Mammary epithelial cell (primary cell): ENCODE measurements at regions of chr2 and their contacts with region 1.

Region 1: GRCh38 chr2:227766373-227766883 is 20.7 kb downstream of the SCYGR8 start:
- DNase-seq: peak; percentile 51
- H3K4me3 ChIP-seq: no peak overlapping the region
- H3K27ac ChIP-seq: no peak overlapping the region
- H3K4me1 ChIP-seq: no peaks in the 10 kb centered on the region
- H3K27me3 ChIP-seq: no peaks in the 10 kb centered on the region
- CTCF ChIP-seq: peak; percentile 81 to 85

Region 2: DNA sequence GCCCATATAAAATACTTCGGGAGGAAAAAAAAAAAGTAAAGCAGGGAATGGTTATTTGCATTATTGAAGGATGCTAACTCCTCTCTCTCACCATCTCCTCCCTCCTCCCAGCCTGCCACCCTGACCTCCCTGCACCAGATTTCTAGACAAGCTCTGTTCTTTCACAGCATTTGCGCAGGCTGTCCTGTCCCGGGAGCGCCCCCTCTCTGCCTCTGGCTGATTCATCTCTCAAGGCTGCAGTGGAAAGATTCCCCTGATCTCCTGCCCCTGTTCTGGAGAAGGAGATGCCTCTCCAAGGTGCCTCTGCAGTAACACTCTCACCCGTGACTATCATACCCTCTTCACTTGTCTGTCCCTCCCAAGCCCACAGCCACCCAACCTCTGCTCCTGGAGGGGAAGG is 640.9 kb before region 1 on chr2:
- CTCF ChIA-PET with region 1: no interaction called
- dilution Hi-C with region 1: no loop called
- in situ Hi-C with region 1: loop called (anchors 25 kb)
- intact Hi-C with region 1: loop called (anchors 2 kb)
- DNase-seq: no peak
- H3K4me3 ChIP-seq: no peak overlapping the region
- H3K27ac ChIP-seq: no peak overlapping the region
- H3K4me1 ChIP-seq: no peaks in the 10 kb centered on the region
- H3K27me3 ChIP-seq: peaks cover 1% of the 10 kb centered on the region
- CTCF ChIP-seq: no peak

Region 3: DNA sequence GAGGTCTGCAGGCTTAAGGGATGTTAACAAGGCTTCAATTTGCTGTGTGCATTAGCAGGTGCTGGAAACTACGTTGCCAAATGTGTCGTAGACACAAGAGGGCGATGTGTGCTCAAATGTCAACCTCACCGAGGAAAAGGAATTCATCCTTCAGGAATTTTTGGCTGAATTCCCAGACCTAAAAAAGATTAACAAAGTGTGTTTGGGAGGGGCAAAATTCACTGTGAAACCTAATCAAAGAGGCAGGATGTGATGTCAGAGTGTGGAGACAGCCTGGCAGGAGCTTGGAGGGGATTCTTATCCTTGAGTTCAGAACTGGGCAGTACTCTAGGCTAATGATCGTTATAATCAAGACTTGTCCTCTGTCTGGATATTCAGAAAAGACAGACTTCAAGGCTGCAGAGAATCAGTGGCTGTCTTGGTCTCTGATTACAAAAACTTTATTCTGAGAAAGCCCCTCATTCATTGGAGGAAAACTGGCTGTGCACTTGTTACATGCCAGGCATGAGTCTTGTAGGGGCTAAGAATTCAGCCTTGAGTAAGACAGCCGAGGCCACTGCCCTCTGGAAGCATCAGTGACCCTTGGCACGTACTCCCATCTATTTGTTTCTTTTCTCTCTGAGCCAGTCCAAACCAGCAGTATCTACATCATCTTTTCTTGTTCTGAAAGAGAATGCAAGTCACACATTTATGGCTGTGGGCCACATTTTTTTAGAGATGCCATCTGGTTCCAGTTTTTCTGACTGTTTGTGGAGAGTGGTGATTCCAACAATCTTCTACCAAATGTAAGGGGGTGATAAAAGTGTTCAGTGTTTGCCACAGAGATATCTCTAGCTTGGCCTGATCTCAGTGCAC is 360.0 kb before region 1 on chr2:
- CTCF ChIA-PET with region 1: no interaction called
- dilution Hi-C with region 1: no loop called
- in situ Hi-C with region 1: loop called (anchors 10 to 25 kb)
- intact Hi-C with region 1: loop called (anchors 1 kb)
- DNase-seq: peak; percentile 95
- H3K4me3 ChIP-seq: no peak overlapping the region
- H3K27ac ChIP-seq: peak overlapping the region; percentile 87
- H3K4me1 ChIP-seq: peaks cover 20% of the 10 kb centered on the region
- H3K27me3 ChIP-seq: no peaks in the 10 kb centered on the region
- CTCF ChIP-seq: peak; percentile 82 to 83

Region 4: GRCh38 chr2:227479865-227480475 is 286.5 kb before region 1 on chr2:
- CTCF ChIA-PET with region 1: interaction called, 4 read pairs
- dilution Hi-C with region 1: no loop called
- in situ Hi-C with region 1: no loop called
- intact Hi-C with region 1: loop called (anchors 1 kb)
- DNase-seq: no peak
- H3K4me3 ChIP-seq: no peak overlapping the region
- H3K27ac ChIP-seq: no peak overlapping the region
- H3K4me1 ChIP-seq: peaks cover 12% of the 10 kb centered on the region
- H3K27me3 ChIP-seq: no peaks in the 10 kb centered on the region
- CTCF ChIP-seq: peak in 1 of 2 donors; percentile 6

Region 5: GRCh38 chr2:227661019-227661649 is 105.3 kb before region 1 on chr2:
- CTCF ChIA-PET with region 1: interaction called, 14 read pairs
- dilution Hi-C with region 1: no loop called
- in situ Hi-C with region 1: loop called (anchors 10 kb)
- intact Hi-C with region 1: loop called (anchors 1 kb)
- DNase-seq: no peak
- H3K4me3 ChIP-seq: no peak overlapping the region
- H3K27ac ChIP-seq: no peak overlapping the region
- H3K4me1 ChIP-seq: no peaks in the 10 kb centered on the region
- H3K27me3 ChIP-seq: no peaks in the 10 kb centered on the region
- CTCF ChIP-seq: no peak

Region 6: GRCh38 chr2:227884511-227884947 is 118.1 kb after region 1 on chr2:
- CTCF ChIA-PET with region 1: no interaction called
- dilution Hi-C with region 1: no loop called
- in situ Hi-C with region 1: no loop called
- intact Hi-C with region 1: loop called (anchors 5 kb)
- DNase-seq: peak; percentile 58
- H3K4me3 ChIP-seq: no peak overlapping the region
- H3K27ac ChIP-seq: no peak overlapping the region
- H3K4me1 ChIP-seq: peaks cover 7% of the 10 kb centered on the region
- H3K27me3 ChIP-seq: no peaks in the 10 kb centered on the region
- CTCF ChIP-seq: peak; percentile 90 to 98

Region 7: DNA sequence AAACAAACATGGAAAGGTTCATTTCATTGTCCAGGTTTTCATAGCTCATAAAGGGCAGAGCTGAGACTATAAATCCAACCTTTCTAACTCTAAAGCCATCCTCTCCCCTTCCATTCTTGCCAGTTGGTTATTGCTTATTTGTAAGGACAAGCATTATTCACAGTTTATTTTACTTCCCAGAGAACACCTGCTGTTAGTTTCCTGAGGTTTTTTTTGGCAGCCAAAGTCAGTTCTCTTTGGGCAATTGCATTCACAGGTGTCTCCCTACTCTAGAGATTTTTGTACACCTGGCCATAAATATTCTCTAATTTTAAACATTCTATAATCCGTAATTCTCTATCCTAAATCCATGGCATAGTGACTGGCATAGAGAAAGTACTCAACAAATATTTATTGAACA is 502.3 kb after region 1 on chr2:
- CTCF ChIA-PET with region 1: no interaction called
- dilution Hi-C with region 1: no loop called
- in situ Hi-C with region 1: no loop called
- intact Hi-C with region 1: no loop called
- DNase-seq: no peak
- H3K4me3 ChIP-seq: no peak overlapping the region
- H3K27ac ChIP-seq: no peak overlapping the region
- H3K4me1 ChIP-seq: no peaks in the 10 kb centered on the region
- H3K27me3 ChIP-seq: no peaks in the 10 kb centered on the region
- CTCF ChIP-seq: no peak